ENCODE measurements at regions of chr15 and their contacts with region 1.

Region 1: DNA sequence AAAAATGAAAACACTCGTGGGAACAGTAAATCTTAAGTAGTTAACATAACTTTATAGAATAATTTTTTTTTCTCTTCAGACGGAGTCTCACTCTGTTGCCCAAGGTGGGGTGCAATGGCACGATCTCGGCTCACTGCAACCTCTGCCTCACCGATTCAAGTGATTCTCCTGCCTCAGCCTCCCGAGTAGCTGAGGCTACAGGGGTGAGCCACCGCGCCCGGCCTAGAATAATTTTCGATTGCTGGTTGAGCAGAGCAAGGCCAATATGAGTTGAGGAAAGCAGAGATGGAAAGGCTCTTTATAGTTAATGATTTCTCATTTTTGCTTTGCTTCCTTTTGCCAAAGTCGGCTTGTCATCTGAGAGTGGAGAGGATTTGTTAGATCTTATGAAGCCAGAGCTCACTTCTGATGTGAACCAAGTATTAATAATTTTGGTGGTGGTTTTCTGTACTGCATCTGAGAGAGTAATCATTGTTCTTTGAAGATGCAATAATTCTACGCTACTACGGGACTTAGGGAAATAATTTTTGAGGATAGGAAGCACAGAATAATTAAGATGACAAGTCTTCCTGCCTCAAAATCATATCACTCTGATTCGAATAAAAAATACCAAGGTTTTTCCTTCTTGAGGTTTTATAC is 1.6 kb upstream of the GOLM2 start:
- DNase-seq: no peak
- H3K4me3 Mint-ChIP-seq: peak overlapping the region; percentile 95
- H3K27ac Mint-ChIP-seq: peak overlapping the region; percentile 97
- H3K4me1 Mint-ChIP-seq: peaks cover 15% of the 10 kb centered on the region
- H3K27me3 Mint-ChIP-seq: no peaks in the 10 kb centered on the region
- CTCF ChIP-seq: no peak

Region 2: DNA sequence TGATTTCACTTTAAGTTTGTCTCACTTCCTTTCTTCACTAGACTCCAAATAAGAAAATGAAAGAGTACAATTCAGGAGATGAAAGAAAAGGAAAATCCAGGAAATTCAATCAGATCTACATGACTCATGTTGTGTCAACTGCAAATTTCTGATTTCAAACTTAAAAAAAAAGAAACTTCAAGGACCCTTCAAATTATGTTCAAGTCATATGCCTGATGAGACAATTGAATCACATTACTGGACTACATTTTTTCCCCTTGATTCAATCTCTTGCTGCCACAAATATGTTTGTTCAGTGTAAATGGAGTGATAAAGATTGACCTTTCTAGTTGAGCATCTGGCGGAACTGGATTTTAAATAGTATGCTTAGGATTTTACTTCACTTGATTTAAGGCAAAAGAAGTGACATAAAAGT is 129.2 kb before region 1 on chr15:
- CTCF ChIA-PET with region 1: no interaction called
- POLR2A ChIA-PET with region 1: no interaction called
- intact Hi-C with region 1: no loop called
- DNase-seq: no peak
- H3K4me3 Mint-ChIP-seq: no peak overlapping the region
- H3K27ac Mint-ChIP-seq: no peak overlapping the region
- H3K4me1 Mint-ChIP-seq: no peaks in the 10 kb centered on the region
- H3K27me3 Mint-ChIP-seq: no peaks in the 10 kb centered on the region
- CTCF ChIP-seq: no peak

Region 3: GRCh38 chr15:44275150-44275830 is 11.6 kb before region 1 on chr15:
- CTCF ChIA-PET with region 1: interaction called, 4 read pairs
- POLR2A ChIA-PET with region 1: interaction called, 11 read pairs
- intact Hi-C with region 1: no loop called
- DNase-seq: no peak
- H3K4me3 Mint-ChIP-seq: no peak overlapping the region
- H3K27ac Mint-ChIP-seq: no peak overlapping the region
- H3K4me1 Mint-ChIP-seq: peaks cover 6% of the 10 kb centered on the region
- H3K27me3 Mint-ChIP-seq: peaks cover 13% of the 10 kb centered on the region
- CTCF ChIP-seq: no peak

Region 4: DNA sequence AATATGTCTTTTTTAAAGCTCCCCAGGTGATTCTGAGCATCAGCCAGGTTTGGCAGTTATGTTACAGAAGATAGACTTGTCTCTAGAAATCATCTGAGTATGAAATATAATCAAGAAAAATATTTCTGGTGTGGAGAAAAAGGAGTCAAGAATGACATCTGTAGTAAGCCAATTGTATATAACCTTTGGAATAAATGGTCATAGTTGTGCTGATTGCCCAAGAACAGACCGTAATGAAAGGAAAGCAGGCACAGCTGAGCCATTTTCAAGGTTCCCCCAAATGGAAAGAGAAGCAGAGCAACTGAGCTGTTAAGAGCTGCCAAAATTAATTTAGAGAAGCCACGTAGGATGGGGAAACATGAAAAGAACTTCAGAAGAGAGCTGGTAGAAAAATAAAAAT is 28.2 kb after region 1 on chr15:
- CTCF ChIA-PET with region 1: interaction called, 4 read pairs
- POLR2A ChIA-PET with region 1: interaction called, 16 read pairs
- intact Hi-C with region 1: no loop called
- DNase-seq: no peak
- H3K4me3 Mint-ChIP-seq: no peak overlapping the region
- H3K27ac Mint-ChIP-seq: no peak overlapping the region
- H3K4me1 Mint-ChIP-seq: peaks cover 5% of the 10 kb centered on the region
- H3K27me3 Mint-ChIP-seq: no peaks in the 10 kb centered on the region
- CTCF ChIP-seq: no peak

Region 5: GRCh38 chr15:44340410-44340809 is 53.5 kb after region 1 on chr15:
- CTCF ChIA-PET with region 1: interaction called, 4 read pairs
- POLR2A ChIA-PET with region 1: interaction called, 16 read pairs
- intact Hi-C with region 1: no loop called
- DNase-seq: peak; percentile 69
- H3K4me3 Mint-ChIP-seq: peak overlapping the region; percentile 46
- H3K27ac Mint-ChIP-seq: peak overlapping the region; percentile 85
- H3K4me1 Mint-ChIP-seq: peaks cover 8% of the 10 kb centered on the region
- H3K27me3 Mint-ChIP-seq: no peaks in the 10 kb centered on the region
- CTCF ChIP-seq: no peak

Region 6: GRCh38 chr15:44501768-44502366 is 214.9 kb after region 1 on chr15:
- CTCF ChIA-PET with region 1: no interaction called
- POLR2A ChIA-PET with region 1: interaction called, 13 read pairs
- intact Hi-C with region 1: loop called (anchors 5 kb)
- DNase-seq: peak; percentile 49
- H3K4me3 Mint-ChIP-seq: no peak overlapping the region
- H3K27ac Mint-ChIP-seq: no peak overlapping the region
- H3K4me1 Mint-ChIP-seq: no peaks in the 10 kb centered on the region
- H3K27me3 Mint-ChIP-seq: no peaks in the 10 kb centered on the region
- CTCF ChIP-seq: peak; percentile 58

Region 7: DNA sequence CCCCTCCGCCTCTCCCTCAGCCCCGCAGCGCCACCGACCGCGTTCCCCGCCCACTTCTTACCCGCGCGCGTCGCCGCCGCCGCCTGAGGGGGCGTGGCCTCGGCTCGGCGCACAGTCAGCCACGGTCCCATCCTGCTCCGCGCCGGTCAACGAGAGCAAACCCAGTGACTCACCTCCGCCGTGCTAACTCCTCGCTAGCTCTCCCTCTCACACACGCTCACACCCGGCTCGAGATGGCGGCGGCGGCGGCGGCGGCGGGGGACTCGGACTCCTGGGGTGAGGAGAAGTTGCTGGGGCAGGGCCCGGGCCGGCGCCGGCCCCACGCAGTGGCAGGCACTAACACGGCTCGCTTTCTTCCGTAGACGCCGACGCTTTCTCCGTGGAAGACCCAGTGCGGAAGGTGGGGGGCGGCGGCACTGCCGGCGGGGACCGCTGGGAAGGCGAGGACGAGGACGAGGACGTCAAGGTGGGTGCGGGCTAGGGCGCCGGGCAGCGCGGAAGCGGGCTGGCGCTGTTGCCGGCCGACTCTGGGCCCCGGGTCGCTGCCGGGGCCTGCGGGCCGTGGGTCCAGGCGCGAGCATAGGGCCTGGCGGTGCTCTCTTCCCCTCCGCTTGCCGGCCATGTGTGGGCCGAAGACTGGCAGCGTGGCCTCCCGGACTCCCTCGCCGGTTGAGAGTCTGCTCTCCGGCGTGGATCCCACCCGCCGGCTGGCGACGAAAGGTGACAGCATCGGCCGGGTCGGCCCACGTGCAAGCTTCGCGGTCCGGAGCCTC is 250.2 kb after region 1 on chr15 and contains the start of gene EIF3J:
- CTCF ChIA-PET with region 1: no interaction called
- POLR2A ChIA-PET with region 1: interaction called, 13 read pairs
- intact Hi-C with region 1: no loop called
- DNase-seq: peak; percentile 96
- H3K4me3 Mint-ChIP-seq: peak within 1 kb of the TSS; percentile 82
- H3K27ac Mint-ChIP-seq: peak within 1 kb of the TSS; percentile 97
- H3K4me1 Mint-ChIP-seq: peaks cover 34% of the 10 kb centered on the region
- H3K27me3 Mint-ChIP-seq: no peaks in the 10 kb centered on the region
- CTCF ChIP-seq: no peak
- total RNA-seq, gene EIF3J: 165 and 213 TPM in 2 replicates

Measured in MCF 10A (cell line).